ENCODE measurements at regions of chr3 and their contacts with region 1.

Region 1: GRCh38 chr3:196711838-196712513 is at the starts of genes CEP19 and PIGX:
- DNase-seq: peak; percentile 95
- H3K4me3 Mint-ChIP-seq: peak within 1 kb of the TSS; percentile 81
- H3K27ac Mint-ChIP-seq: peak within 1 kb of the TSS; percentile 94
- H3K4me1 Mint-ChIP-seq: peaks cover 27% of the 10 kb centered on the region
- H3K27me3 Mint-ChIP-seq: no peaks in the 10 kb centered on the region
- total RNA-seq, gene CEP19: 6.5 to 6.6 TPM
- total RNA-seq, gene PIGX: 47.5 to 49.2 TPM

Region 2: DNA sequence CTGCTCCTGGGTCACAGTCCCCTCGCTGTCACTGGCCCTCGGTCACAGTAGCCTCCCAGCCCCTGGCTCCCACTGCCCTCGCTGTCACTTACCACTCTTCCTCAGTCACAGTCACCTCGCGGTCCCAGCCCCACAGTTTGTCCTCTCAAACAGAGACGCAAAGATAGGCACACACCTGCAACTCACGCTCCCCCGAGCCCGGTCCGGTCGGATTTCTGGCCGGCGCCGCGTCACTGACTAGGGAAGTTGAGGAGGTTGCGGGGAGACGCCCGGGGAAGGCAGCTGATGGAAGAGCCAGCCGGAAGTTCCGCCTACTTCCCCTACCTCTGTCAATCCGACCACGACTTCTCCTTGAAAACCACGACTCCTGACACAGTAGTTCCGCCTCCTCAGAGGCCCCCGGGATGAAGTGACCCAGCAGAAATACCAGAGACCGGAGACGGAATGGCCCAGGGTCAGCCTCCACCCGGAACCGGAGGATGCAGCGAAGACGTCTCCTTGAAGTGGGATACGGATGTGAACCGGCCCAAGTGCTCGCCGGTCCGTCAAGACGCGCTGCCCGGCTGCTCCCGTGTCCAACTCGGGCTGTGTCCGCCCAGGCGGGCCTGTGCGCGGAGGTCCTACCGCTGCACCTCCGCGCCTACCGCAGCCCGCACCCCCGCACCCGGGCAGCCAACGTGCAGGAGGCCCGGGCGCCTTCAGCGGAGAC is 424.4 kb before region 1 on chr3 and contains the start of gene PCYT1A:
- CTCF ChIA-PET with region 1: no interaction called
- POLR2A ChIA-PET with region 1: no interaction called
- intact Hi-C with region 1: no loop called
- DNase-seq: peak; percentile 87
- H3K4me3 Mint-ChIP-seq: peak within 1 kb of the TSS; percentile 100
- H3K27ac Mint-ChIP-seq: peak within 1 kb of the TSS; percentile 98
- H3K4me1 Mint-ChIP-seq: peaks cover 39% of the 10 kb centered on the region
- H3K27me3 Mint-ChIP-seq: no peaks in the 10 kb centered on the region
- total RNA-seq, gene PCYT1A: 46.8 to 48.6 TPM

Region 3: DNA sequence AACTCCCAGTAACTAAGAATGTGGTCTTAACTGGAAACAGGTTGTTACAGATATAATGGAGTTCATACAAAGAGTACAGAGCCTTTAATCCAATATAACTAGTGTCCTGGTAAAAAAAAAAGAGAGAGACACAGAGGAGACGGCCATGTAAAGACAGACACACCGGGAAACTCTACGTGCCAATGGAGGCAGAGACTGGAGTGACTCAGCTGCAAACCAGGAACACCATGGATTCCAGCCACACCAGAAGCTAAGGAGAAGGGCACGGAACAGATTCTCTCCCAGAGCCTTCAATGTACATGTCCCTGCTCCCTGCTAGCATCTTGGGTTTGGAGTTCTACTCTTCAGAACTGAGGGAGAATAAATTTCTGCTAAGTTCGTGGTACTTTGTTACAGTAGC is 212.9 kb before region 1 on chr3:
- CTCF ChIA-PET with region 1: no interaction called
- POLR2A ChIA-PET with region 1: no interaction called
- intact Hi-C with region 1: no loop called
- DNase-seq: no peak
- H3K4me3 Mint-ChIP-seq: peak overlapping the region; percentile 97
- H3K27ac Mint-ChIP-seq: no peak overlapping the region
- H3K4me1 Mint-ChIP-seq: peaks cover 48% of the 10 kb centered on the region
- H3K27me3 Mint-ChIP-seq: no peaks in the 10 kb centered on the region

Region 4: GRCh38 chr3:196632046-196632751 is 79.8 kb before region 1 on chr3:
- CTCF ChIA-PET with region 1: no interaction called
- POLR2A ChIA-PET with region 1: interaction called, 3 read pairs
- intact Hi-C with region 1: loop called (anchors 2 kb)
- DNase-seq: peak; percentile 92
- H3K4me3 Mint-ChIP-seq: peak overlapping the region; percentile 80
- H3K27ac Mint-ChIP-seq: peak overlapping the region; percentile 94
- H3K4me1 Mint-ChIP-seq: peaks cover 53% of the 10 kb centered on the region
- H3K27me3 Mint-ChIP-seq: no peaks in the 10 kb centered on the region

Region 5: GRCh38 chr3:196726788-196727675 is 15.1 kb after region 1 on chr3:
- CTCF ChIA-PET with region 1: interaction called, 4 read pairs
- POLR2A ChIA-PET with region 1: interaction called, 3 read pairs
- intact Hi-C with region 1: loop called (anchors 2 kb)
- DNase-seq: peak; percentile 66
- H3K4me3 Mint-ChIP-seq: no peak overlapping the region
- H3K27ac Mint-ChIP-seq: peak overlapping the region; percentile 73
- H3K4me1 Mint-ChIP-seq: peaks cover 26% of the 10 kb centered on the region
- H3K27me3 Mint-ChIP-seq: no peaks in the 10 kb centered on the region

Region 6: GRCh38 chr3:196739671-196740480 is 27.9 kb after region 1 on chr3 and contains the start of gene PAK2:
- CTCF ChIA-PET with region 1: no interaction called
- POLR2A ChIA-PET with region 1: interaction called, 28 read pairs
- intact Hi-C with region 1: loop called (anchors 1 kb)
- DNase-seq: peak; percentile 92
- H3K4me3 Mint-ChIP-seq: peak within 1 kb of the TSS; percentile 98
- H3K27ac Mint-ChIP-seq: peak within 1 kb of the TSS; percentile 96
- H3K4me1 Mint-ChIP-seq: peaks cover 28% of the 10 kb centered on the region
- H3K27me3 Mint-ChIP-seq: no peaks in the 10 kb centered on the region
- total RNA-seq, gene PAK2: 98.4 to 101 TPM

Measured in activated CD4-positive, alpha-beta memory T cell treated with anti-CD3 and anti-CD28 coated beads for 36 hours (primary cell).